BJ (cell line): ENCODE measurements at regions of chr7 and their contacts with region 1.

Region 1: GRCh38 chr7:32865448-32866030 is 26.0 kb downstream of the KBTBD2 start:
- DNase-seq: no peak
- H3K4me3 ChIP-seq: no peak overlapping the region
- H3K27me3 ChIP-seq: no peaks in the 10 kb centered on the region
- CTCF ChIP-seq: no peak

Region 2: DNA sequence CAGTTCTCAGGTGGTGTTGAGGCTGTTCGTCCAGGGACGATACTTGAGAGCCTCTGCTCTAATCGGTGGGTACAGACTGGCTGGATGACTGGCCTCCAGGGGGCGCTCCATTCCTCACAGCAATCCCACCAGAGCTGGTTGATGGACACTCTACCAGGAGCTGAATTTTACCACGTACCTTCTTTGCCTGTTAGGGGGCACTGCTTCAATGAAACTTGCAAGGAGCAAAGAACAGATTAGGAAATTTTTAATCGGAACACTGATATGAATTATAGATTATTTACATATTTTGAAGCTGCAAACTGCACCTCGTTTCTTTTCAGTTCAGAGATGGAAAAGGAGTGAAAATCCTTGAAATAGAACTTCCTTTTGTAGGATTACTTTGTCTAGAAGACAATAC is 18.8 kb before region 1 on chr7:
- CTCF ChIA-PET with region 1: interaction called, 12 read pairs
- POLR2A ChIA-PET with region 1: no interaction called
- DNase-seq: no peak
- H3K4me3 ChIP-seq: no peak overlapping the region
- H3K27me3 ChIP-seq: no peaks in the 10 kb centered on the region
- CTCF ChIP-seq: peak; percentile 65